ENCODE measurements at regions of chr5 and their contacts with region 1.

Region 1: GRCh38 chr5:138178516-138179276 is at the starts of genes BRD8 and KIF20A:
- DNase-seq: peak; percentile 95
- H3K4me3 ChIP-seq: peak within 1 kb of the TSS; percentile 77 to 99 (median 90)
- H3K27ac ChIP-seq: peak within 1 kb of the TSS; percentile 92
- H3K4me1 ChIP-seq: peaks cover 14% of the 10 kb centered on the region
- H3K27me3 ChIP-seq: no peaks in the 10 kb centered on the region
- CTCF ChIP-seq: no peak
- total RNA-seq, gene BRD8: 25.8 to 44.5 TPM
- total RNA-seq, gene KIF20A: 0.67 to 36.5 TPM

Region 2: DNA sequence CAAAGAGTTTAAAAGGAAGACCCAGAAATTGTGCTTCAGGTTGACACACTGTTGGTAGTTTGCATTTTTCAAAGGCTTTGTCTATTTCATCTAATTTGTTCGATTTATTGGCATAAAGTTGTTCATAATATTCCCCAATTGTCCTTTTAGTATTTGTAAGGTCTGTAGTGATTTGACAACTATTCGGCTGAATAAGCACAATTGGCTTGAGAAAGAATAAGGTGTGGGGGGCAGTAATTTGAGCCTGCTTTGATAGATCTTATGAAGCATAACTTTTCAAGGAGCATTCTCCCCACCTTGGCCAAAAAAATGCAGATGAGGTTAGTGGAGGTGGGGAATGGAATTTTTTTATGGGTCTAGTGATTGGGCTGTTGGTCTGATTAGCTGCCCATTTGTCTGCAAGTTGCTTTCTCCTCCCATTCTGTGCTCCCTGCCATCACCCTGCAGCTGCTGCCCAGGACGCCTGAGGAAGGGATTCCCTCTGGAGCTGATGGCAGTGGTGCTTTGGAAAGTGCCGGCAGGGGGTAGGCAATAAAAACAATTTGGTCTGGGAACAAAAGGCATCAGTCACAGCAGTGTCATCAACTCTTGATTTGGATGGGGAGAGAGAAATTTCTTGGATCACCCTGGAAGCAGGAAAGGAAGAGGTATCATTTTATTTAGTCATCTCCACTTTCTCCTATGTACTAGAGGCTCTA is 68.3 kb before region 1 on chr5:
- CTCF ChIA-PET with region 1: no interaction called
- dilution Hi-C with region 1: loop called (anchors 5 kb)
- in situ Hi-C with region 1: no loop called
- intact Hi-C with region 1: no loop called
- DNase-seq: no peak
- H3K4me3 ChIP-seq: no peak overlapping the region
- H3K27ac ChIP-seq: no peak overlapping the region
- H3K4me1 ChIP-seq: peaks cover 6% of the 10 kb centered on the region
- H3K27me3 ChIP-seq: no peaks in the 10 kb centered on the region
- CTCF ChIP-seq: no peak

Region 3: DNA sequence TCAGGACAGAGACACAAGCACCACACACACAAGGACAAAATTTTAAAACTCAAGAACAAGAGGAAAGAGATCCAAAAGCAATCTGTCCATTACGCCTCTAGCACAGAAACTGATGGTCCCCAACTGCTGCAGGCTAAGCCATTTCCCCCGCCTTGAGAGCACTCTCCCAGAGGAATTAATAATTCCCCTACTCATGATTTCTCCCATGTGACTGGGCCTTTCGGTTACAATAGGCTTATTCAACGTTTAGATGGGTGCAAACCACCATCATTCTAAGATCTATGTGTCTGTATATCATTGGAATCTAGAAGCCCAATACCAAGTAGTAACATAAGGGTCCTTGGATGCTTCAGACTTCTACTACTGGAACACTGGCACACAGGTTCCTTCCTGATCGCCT is 19.0 kb before region 1 on chr5:
- CTCF ChIA-PET with region 1: no interaction called
- dilution Hi-C with region 1: no loop called
- in situ Hi-C with region 1: no loop called
- intact Hi-C with region 1: no loop called
- DNase-seq: no peak
- H3K4me3 ChIP-seq: no peak overlapping the region
- H3K27ac ChIP-seq: no peak overlapping the region
- H3K4me1 ChIP-seq: no peaks in the 10 kb centered on the region
- H3K27me3 ChIP-seq: no peaks in the 10 kb centered on the region
- CTCF ChIP-seq: no peak

Region 4: DNA sequence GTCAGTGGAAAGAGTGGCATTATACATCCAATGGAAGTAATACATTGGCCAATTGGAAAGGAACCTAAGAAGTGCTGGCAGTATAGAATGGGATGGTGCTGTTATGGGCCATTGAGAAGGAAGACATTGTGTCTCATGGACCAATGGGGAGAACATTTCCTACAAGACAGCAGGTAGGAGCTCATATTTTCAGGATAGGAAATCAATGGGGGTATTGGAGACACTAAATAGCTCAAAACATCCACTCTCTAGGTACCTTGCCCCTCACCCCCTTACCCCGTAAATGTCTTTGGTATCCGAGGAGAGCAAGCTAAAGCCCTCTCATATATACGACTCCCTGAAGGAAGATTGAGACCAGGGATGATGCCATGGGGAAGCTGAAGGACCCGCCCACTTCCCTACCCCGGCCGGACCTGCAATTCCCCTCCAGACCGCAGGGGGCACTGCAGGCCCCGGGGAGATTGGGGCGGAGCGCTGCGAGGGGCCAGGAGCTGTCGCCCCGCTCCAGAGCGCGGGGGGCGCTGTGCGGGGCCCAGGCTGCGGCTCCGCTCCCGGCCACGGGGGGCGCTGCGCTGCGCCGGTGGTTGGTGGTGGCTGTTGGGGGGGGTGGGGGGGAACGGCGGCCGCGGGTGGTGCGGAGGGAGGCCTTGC is 173.5 kb after region 1 on chr5 and contains the start of gene KDM3B:
- CTCF ChIA-PET with region 1: no interaction called
- dilution Hi-C with region 1: no loop called
- in situ Hi-C with region 1: no loop called
- intact Hi-C with region 1: loop called (anchors 1 kb)
- DNase-seq: peak; percentile 81
- H3K4me3 ChIP-seq: peak within 1 kb of the TSS; percentile 77 to 83 (median 82)
- H3K27ac ChIP-seq: peak within 1 kb of the TSS; percentile 65
- H3K4me1 ChIP-seq: peaks cover 18% of the 10 kb centered on the region
- H3K27me3 ChIP-seq: no peaks in the 10 kb centered on the region
- CTCF ChIP-seq: peak; percentile 98
- total RNA-seq, gene KDM3B: 35.6 to 42.7 TPM

Region 5: GRCh38 chr5:138408023-138408422 is 229.3 kb after region 1 on chr5:
- CTCF ChIA-PET with region 1: no interaction called
- dilution Hi-C with region 1: no loop called
- in situ Hi-C with region 1: loop called in 1 of 2 experiments (anchors 25 kb)
- intact Hi-C with region 1: loop called (anchors 1 kb)
- DNase-seq: no peak
- H3K4me3 ChIP-seq: no peak overlapping the region
- H3K27ac ChIP-seq: no peak overlapping the region
- H3K4me1 ChIP-seq: no peaks in the 10 kb centered on the region
- H3K27me3 ChIP-seq: no peaks in the 10 kb centered on the region
- CTCF ChIP-seq: no peak

Region 6: GRCh38 chr5:138464008-138464387 is 285.3 kb after region 1 on chr5:
- CTCF ChIA-PET with region 1: no interaction called
- dilution Hi-C with region 1: no loop called
- in situ Hi-C with region 1: no loop called
- intact Hi-C with region 1: no loop called
- DNase-seq: peak; percentile 94
- H3K4me3 ChIP-seq: peak overlapping the region; percentile 66 to 90 (median 83)
- H3K27ac ChIP-seq: peak overlapping the region; percentile 84
- H3K4me1 ChIP-seq: peaks cover 45% of the 10 kb centered on the region
- H3K27me3 ChIP-seq: no peaks in the 10 kb centered on the region
- CTCF ChIP-seq: peak; percentile 58 to 71

Region 7: GRCh38 chr5:138503487-138504270 is 325.0 kb after region 1 on chr5:
- CTCF ChIA-PET with region 1: no interaction called
- dilution Hi-C with region 1: no loop called
- in situ Hi-C with region 1: no loop called
- intact Hi-C with region 1: loop called (anchors 1 kb)
- DNase-seq: peak; percentile 52
- H3K4me3 ChIP-seq: no peak overlapping the region
- H3K27ac ChIP-seq: no peak overlapping the region
- H3K4me1 ChIP-seq: peaks cover 45% of the 10 kb centered on the region
- H3K27me3 ChIP-seq: no peaks in the 10 kb centered on the region
- CTCF ChIP-seq: peak; percentile 84 to 91

Measured in mammary epithelial cell (primary cell).